ENCODE measurements at regions of chr6 and their contacts with region 1.

Region 1: DNA sequence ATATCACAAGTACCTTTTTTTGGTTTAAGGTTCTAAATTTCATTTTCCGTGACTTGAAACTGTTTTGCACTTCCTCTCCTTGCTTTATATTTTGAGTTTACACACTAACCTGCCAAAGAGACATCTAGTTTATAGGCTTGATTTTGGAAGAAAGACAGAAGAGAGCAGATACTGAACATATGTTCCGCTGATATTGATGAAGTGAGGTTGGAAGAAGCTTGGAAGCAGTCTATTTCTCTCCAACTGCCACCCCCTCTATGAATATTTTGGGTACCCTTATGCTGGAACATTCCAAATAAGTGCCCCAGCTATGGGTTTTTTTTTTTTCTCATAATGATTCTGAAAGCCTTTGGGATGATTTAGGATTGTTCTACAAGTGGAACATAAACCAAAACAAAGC is 150.6 kb downstream of the LAMA2 start:
- DNase-seq: no peak
- H3K4me3 ChIP-seq: no peak overlapping the region
- H3K27ac ChIP-seq: no peak overlapping the region
- H3K4me1 ChIP-seq: no peaks in the 10 kb centered on the region; the same call in 1 of the 2 replicates
- H3K27me3 ChIP-seq: no peaks in the 10 kb centered on the region
- CTCF ChIP-seq: no peak

Region 2: DNA sequence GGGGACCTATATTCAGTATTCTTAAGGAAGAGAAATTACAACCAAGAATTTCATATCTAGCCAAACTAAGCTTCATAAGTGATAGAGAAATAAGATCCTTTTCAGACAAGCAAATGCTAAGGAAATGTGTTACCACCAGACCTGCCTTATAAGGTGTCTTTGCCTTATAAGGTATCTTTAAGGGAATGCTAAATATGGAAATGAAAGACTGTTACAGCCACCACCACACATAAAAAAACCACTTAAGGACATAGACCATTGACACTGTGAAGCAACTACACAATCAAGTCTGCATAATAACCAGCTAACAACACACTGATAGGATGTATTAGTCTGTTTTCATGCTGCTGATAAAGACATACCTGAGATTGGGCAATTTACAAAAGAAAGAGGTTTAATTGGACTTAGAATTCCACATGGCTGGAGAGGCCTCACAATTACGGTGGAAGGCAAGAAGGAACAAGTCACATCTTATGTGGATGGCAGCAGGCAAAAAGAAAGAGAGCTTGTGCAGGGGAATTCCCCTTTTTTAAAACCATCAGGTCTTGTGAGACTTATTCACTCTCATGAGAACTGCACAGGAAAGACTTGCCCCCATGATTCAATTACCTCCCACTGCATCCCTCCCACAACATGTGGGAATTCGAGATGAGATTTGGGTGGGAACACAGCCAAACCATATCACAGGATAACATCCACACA is 269.8 kb before region 1 on chr6:
- CTCF ChIA-PET with region 1: no interaction called
- POLR2A ChIA-PET with region 1: no interaction called
- intact Hi-C with region 1: no loop called
- DNase-seq: no peak
- H3K4me3 ChIP-seq: no peak overlapping the region
- H3K27ac ChIP-seq: no peak overlapping the region
- H3K4me1 ChIP-seq: no peaks in the 10 kb centered on the region
- H3K27me3 ChIP-seq: no peaks in the 10 kb centered on the region
- CTCF ChIP-seq: no peak

Region 3: DNA sequence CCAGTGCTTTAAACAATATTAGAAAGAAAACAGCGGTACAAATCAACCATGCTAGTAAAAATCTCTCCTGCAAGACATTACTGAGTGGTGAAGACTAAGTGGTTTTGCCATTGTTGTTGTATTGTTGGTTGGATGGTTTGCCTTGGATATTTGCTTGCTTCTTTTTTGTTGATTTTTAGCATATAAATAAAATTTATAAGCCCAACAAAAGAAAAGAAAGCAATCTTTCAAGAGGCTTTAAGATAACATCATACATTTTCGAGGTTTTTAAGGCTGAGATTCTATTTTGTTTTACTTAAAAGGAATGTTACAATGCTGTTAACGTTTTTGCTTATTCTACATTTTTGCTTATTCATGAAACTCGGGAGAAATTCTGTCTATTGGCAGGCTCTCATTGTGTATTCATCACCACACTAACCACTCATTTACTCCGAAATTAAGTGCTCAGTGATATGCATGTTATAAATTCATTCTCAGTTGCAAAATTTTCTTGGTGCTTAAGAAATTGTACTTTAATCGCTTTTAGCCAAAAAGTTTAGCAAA is 11.5 kb before region 1 on chr6:
- CTCF ChIA-PET with region 1: no interaction called
- POLR2A ChIA-PET with region 1: interaction called, 19 read pairs
- intact Hi-C with region 1: no loop called
- DNase-seq: no peak
- H3K4me3 ChIP-seq: no peak overlapping the region
- H3K27ac ChIP-seq: no peak overlapping the region
- H3K4me1 ChIP-seq: no peaks in the 10 kb centered on the region
- H3K27me3 ChIP-seq: no peaks in the 10 kb centered on the region
- CTCF ChIP-seq: no peak

Region 4: DNA sequence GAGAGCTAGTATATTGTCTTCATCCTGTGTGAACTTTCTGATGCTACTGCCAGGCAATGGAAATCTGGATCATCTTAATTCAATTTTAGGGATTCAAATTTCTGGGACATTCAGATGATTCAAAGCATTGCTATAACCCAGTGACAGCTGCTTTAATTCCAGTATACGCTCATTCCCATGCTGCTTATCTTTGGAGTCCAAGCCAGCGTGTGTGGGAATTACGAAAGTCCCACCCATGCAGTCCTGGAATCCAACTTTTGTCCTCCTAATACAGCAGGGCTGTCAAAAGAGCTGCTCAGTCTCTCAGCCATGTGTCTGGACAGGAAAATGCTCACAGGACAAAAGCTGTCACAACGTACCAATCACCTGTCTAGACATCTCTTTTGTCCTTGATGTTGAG is 69.2 kb after region 1 on chr6:
- CTCF ChIA-PET with region 1: no interaction called
- POLR2A ChIA-PET with region 1: no interaction called
- intact Hi-C with region 1: no loop called
- DNase-seq: no peak
- H3K4me3 ChIP-seq: no peak overlapping the region
- H3K27ac ChIP-seq: no peak overlapping the region
- H3K4me1 ChIP-seq: no peaks in the 10 kb centered on the region
- H3K27me3 ChIP-seq: no peaks in the 10 kb centered on the region
- CTCF ChIP-seq: no peak